Activated CD4-positive, alpha-beta T cell treated with anti-CD3 and anti-CD28 coated beads, Interleukin-2, amount 10 ng/mL, durations not matched to agents 24 days and 14 days (primary cell): ENCODE measurements at regions of chr6 and their contacts with region 1.

Region 1: GRCh38 chr6:70706491-70707123 is 38.9 kb downstream of the SMAP1 start:
- DNase-seq: no peak
- H3K4me3 Mint-ChIP-seq: no peak overlapping the region
- H3K27ac Mint-ChIP-seq: no peak overlapping the region
- H3K4me1 Mint-ChIP-seq: peaks cover 18% of the 10 kb centered on the region
- H3K27me3 Mint-ChIP-seq: no peaks in the 10 kb centered on the region

Region 2: GRCh38 chr6:70717038-70717801 is 10.6 kb after region 1 on chr6:
- intact Hi-C with region 1: loop called (anchors 1 kb)
- DNase-seq: peak; percentile 73
- H3K4me3 Mint-ChIP-seq: peak overlapping the region; percentile 38
- H3K27ac Mint-ChIP-seq: peak overlapping the region; percentile 86
- H3K4me1 Mint-ChIP-seq: peaks cover 29% of the 10 kb centered on the region
- H3K27me3 Mint-ChIP-seq: no peaks in the 10 kb centered on the region

Region 3: GRCh38 chr6:70884074-70884983 is 177.7 kb after region 1 on chr6:
- intact Hi-C with region 1: loop called (anchors 1 kb)
- DNase-seq: peak; percentile 88
- H3K4me3 Mint-ChIP-seq: no peak overlapping the region
- H3K27ac Mint-ChIP-seq: no peak overlapping the region
- H3K4me1 Mint-ChIP-seq: no peaks in the 10 kb centered on the region
- H3K27me3 Mint-ChIP-seq: peaks cover 14% of the 10 kb centered on the region

Region 4: GRCh38 chr6:70955441-70956190 is 249.0 kb after region 1 on chr6:
- intact Hi-C with region 1: loop called (anchors 1 kb)
- DNase-seq: peak; percentile 96
- H3K4me3 Mint-ChIP-seq: peak overlapping the region; percentile 85
- H3K27ac Mint-ChIP-seq: no peak overlapping the region
- H3K4me1 Mint-ChIP-seq: peaks cover 8% of the 10 kb centered on the region
- H3K27me3 Mint-ChIP-seq: peaks cover 80% of the 10 kb centered on the region

Region 5: GRCh38 chr6:71012866-71013469 is 306.4 kb after region 1 on chr6:
- intact Hi-C with region 1: loop called (anchors 2 kb)
- DNase-seq: peak; percentile 75
- H3K4me3 Mint-ChIP-seq: no peak overlapping the region
- H3K27ac Mint-ChIP-seq: no peak overlapping the region
- H3K4me1 Mint-ChIP-seq: no peaks in the 10 kb centered on the region
- H3K27me3 Mint-ChIP-seq: peaks cover 10% of the 10 kb centered on the region